CD4-positive, alpha-beta T cell (primary cell): ENCODE measurements at regions of chr18 and their contacts with region 1.

Region 1: GRCh38 chr18:25726298-25726697 is 364.1 kb downstream of the SS18 start:
- DNase-seq: peak in 1 of 14 experiments; percentile 10
- ATAC-seq: no peak
- H3K4me3 ChIP-seq: no peak overlapping the region
- H3K4me3 Mint-ChIP-seq: no peak overlapping the region
- H3K27ac ChIP-seq: no peak overlapping the region
- H3K27ac Mint-ChIP-seq: no peak overlapping the region
- H3K4me1 ChIP-seq: no peaks in the 10 kb centered on the region
- H3K4me1 Mint-ChIP-seq: no peaks in the 10 kb centered on the region
- H3K27me3 ChIP-seq: peaks cover 0 to 2% of the 10 kb centered on the region in 2 experiments
- H3K27me3 Mint-ChIP-seq: peaks cover 33% of the 10 kb centered on the region
- CTCF ChIP-seq: no peak

Region 2: GRCh38 chr18:25669741-25670140 is 56.6 kb before region 1 on chr18:
- CTCF ChIA-PET with region 1: no interaction called
- POLR2A ChIA-PET with region 1: no interaction called
- intact Hi-C with region 1: loop called in 1 of 2 experiments (anchors 2 kb)
- DNase-seq: no peak
- ATAC-seq: no peak
- H3K4me3 ChIP-seq: no peak overlapping the region
- H3K4me3 Mint-ChIP-seq: no peak overlapping the region
- H3K27ac ChIP-seq: no peak overlapping the region
- H3K27ac Mint-ChIP-seq: no peak overlapping the region
- H3K4me1 ChIP-seq: no peaks in the 10 kb centered on the region
- H3K4me1 Mint-ChIP-seq: no peaks in the 10 kb centered on the region
- H3K27me3 ChIP-seq: no peaks in the 10 kb centered on the region
- H3K27me3 Mint-ChIP-seq: peaks cover 9% of the 10 kb centered on the region
- CTCF ChIP-seq: no peak

Region 3: GRCh38 chr18:25704081-25704480 is 22.2 kb before region 1 on chr18:
- CTCF ChIA-PET with region 1: no interaction called
- POLR2A ChIA-PET with region 1: no interaction called
- intact Hi-C with region 1: no loop called
- DNase-seq: no peak
- ATAC-seq: no peak
- H3K4me3 ChIP-seq: no peak overlapping the region
- H3K4me3 Mint-ChIP-seq: no peak overlapping the region
- H3K27ac ChIP-seq: no peak overlapping the region
- H3K27ac Mint-ChIP-seq: no peak overlapping the region
- H3K4me1 ChIP-seq: no peaks in the 10 kb centered on the region
- H3K4me1 Mint-ChIP-seq: no peaks in the 10 kb centered on the region
- H3K27me3 ChIP-seq: no peaks in the 10 kb centered on the region
- H3K27me3 Mint-ChIP-seq: peaks cover 8% of the 10 kb centered on the region
- CTCF ChIP-seq: no peak